Pancreas (tissue), 10 donors: ENCODE measurements at regions of chr5 and their contacts with region 1.

Region 1: DNA sequence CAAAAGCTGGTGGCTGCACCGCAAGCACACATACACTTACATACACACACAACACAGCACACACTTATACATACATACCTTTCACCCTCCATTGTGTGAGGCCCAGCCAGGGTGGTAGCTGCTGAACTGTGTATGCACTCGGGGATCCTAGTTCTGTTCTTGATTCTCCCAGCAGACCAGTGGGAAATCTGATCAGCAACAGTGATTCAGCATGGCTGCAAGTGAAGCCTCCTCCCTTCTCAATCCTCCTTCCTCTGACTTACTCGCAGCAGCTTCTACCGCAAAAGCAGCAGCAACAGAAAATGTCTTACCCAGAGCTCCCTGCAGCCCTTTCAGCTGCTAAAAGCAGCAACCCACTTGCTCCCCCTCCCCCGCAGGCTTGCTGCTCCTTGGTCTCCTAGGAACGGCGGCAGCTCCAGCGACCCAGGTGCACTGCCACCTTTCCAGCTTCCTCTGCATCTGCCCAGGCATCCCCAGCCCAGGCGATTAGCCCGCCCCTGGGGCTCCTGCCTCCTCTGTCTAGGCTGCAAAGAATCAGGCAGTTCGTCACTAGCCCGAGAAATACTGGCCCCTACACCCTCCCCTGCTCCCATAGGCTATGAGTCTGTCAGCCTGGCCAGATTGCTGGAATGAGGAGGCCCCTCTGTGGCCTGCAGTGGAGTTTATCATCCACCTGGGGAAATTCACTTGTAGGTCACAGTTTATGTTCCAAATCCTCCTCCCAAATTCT is at the start of gene KLHL3:
- DNase-seq: peak; percentile 23 to 67 (median 40)
- ATAC-seq: peak; percentile 69 to 86 (median 84)
- H3K4me3 ChIP-seq: peak within 1 kb of the TSS in 2 of 4 donors; percentile 24 to 40
- H3K27ac ChIP-seq: peak within 1 kb of the TSS in 2 of 4 donors; percentile 5 to 57
- H3K4me1 ChIP-seq: no peaks in the 10 kb centered on the region
- H3K27me3 ChIP-seq: no peaks in the 10 kb centered on the region
- CTCF ChIP-seq: no peak
- total RNA-seq, gene KLHL3: 1.8 to 4.7 (median 2.9) TPM

Region 2: DNA sequence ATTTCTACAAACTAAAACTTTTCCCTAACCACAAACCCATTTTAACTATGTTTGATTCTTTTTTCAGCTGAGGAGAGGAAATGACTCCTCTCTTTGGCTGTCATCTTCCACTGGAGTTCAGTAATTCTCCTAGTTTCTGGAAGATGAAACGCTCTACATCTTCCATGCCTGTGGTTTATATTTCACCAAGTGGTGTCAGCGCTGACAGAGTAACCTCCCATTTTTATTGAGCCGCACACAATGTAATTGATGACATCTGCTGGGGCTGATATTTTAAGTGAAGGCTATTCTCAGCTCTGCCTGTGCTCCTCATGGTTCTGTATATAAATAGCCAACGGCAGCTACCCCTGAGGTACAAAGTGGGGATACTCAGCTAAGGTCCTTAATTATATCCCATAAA is 471.1 kb before region 1 on chr5:
- intact Hi-C with region 1: no loop called
- DNase-seq: no peak
- ATAC-seq: no peak
- H3K4me3 ChIP-seq: no peak overlapping the region
- H3K27ac ChIP-seq: no peak overlapping the region
- H3K4me1 ChIP-seq: peaks cover 7 to 11% (median 10%) of the 10 kb centered on the region in 3 donors
- H3K27me3 ChIP-seq: no peaks in the 10 kb centered on the region
- CTCF ChIP-seq: no peak

Region 3: DNA sequence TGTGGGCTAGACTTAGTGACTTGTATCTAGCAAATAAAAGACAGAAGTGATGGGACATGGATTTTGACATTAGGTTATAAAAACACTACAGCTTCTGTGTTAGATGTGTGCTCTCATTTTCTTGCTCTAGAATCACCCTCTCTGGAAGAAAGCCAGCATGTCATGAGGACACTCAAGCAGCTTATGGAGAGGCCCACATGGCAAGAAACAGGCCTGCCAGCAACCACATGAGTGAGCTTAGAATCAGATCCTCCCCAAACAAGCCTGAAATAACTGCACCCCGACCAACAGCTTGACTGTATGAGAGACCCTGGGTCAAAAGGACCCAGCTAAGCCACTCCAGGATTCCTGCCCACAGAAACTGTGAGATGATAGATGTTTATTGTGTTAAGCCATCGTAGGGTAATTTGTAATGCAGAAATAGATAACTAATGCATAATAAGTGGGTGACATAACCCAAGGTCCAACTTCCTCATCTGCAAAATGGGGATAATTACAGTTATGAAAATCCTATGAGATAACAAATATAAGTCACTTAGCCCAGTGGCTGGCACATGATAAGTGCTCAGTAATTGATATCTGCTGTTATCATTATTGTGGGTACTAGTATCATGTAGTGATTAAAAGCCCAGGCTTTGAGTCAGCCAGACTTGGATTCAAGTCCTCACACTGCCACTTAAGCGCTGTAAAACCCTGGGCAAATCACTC is 86.3 kb before region 1 on chr5:
- intact Hi-C with region 1: loop called in 1 of 3 experiments (anchors 10 kb)
- DNase-seq: no peak
- ATAC-seq: no peak
- H3K4me3 ChIP-seq: no peak overlapping the region
- H3K27ac ChIP-seq: no peak overlapping the region
- H3K4me1 ChIP-seq: no peaks in the 10 kb centered on the region
- H3K27me3 ChIP-seq: no peaks in the 10 kb centered on the region
- CTCF ChIP-seq: no peak